ENCODE measurements at regions of chr2 and their contacts with region 1.

Region 1: GRCh38 chr2:96145036-96145847 is at the start of gene DUSP2:
- DNase-seq: peak in 8 of 10 donors; percentile 43 to 80 (median 59)
- H3K4me3 ChIP-seq: peak within 1 kb of the TSS; percentile 36 to 77 (median 64)
- H3K27ac ChIP-seq: peak within 1 kb of the TSS in 53 of 59 donors; percentile 3 to 84 (median 66)
- H3K27me3 ChIP-seq: no peaks in the 10 kb centered on the region
- CTCF ChIP-seq: peak in 13 of 56 donors; percentile 10 to 29 (median 21)
- total RNA-seq, gene DUSP2: 2.9 to 109 (median 7.5) TPM

Region 2: GRCh38 chr2:96072746-96073145 is 72.5 kb before region 1 on chr2:
- intact Hi-C with region 1: no loop called
- DNase-seq: no peak
- H3K4me3 ChIP-seq: no peak overlapping the region
- H3K27ac ChIP-seq: peak overlapping the region in 40 of 59 donors; percentile 29 to 89 (median 77)
- H3K27me3 ChIP-seq: no peaks in the 10 kb centered on the region
- CTCF ChIP-seq: no peak

Region 3: DNA sequence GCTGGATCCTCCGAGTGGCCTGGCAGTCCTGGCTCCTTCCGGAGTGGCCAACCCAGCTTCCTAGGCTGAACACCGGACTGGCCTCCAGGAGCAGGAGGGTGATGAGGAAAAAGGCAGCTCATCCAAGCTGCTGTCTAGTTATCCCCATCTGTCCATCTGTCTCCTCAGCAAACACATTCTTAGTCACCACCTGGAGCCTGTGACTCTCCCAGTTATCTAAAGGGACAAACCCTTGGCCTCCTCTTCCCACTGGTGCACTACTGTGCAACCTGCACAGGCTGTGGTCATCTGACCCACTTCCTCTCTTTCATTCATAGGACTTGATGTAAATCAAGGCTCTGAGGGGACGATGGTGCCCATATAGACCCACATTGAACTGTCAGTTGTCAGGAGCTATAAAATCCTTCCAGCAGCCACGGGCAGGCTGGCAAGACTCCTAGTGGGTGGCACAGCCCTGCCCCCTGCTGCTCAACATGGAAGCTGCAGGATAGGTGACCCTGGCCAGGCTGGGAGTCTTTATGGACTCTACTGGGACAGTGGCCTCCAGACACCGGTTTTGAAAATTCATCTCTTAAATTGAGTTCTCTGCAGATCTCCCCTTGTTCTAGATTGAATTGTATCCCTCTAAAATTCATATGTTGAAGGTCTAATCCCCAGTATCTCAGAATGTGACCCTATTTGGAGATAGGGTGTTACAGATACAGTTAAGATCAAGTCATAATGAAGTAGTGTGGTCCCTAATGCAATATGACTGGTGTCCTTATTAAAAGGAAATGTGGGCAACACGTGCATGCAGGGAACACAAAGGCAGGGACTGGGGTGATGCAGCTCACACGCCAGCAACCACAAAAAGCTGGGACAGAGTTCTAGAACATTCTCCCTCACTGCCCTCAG is 29.3 kb after region 1 on chr2:
- intact Hi-C with region 1: no loop called
- DNase-seq: peak; percentile 64 to 86 (median 79)
- H3K4me3 ChIP-seq: no peak overlapping the region
- H3K27ac ChIP-seq: peak overlapping the region in 5 of 59 donors; percentile 8 to 56 (median 15)
- H3K27me3 ChIP-seq: no peaks in the 10 kb centered on the region
- CTCF ChIP-seq: peak; percentile 48 to 99 (median 94)

Region 4: DNA sequence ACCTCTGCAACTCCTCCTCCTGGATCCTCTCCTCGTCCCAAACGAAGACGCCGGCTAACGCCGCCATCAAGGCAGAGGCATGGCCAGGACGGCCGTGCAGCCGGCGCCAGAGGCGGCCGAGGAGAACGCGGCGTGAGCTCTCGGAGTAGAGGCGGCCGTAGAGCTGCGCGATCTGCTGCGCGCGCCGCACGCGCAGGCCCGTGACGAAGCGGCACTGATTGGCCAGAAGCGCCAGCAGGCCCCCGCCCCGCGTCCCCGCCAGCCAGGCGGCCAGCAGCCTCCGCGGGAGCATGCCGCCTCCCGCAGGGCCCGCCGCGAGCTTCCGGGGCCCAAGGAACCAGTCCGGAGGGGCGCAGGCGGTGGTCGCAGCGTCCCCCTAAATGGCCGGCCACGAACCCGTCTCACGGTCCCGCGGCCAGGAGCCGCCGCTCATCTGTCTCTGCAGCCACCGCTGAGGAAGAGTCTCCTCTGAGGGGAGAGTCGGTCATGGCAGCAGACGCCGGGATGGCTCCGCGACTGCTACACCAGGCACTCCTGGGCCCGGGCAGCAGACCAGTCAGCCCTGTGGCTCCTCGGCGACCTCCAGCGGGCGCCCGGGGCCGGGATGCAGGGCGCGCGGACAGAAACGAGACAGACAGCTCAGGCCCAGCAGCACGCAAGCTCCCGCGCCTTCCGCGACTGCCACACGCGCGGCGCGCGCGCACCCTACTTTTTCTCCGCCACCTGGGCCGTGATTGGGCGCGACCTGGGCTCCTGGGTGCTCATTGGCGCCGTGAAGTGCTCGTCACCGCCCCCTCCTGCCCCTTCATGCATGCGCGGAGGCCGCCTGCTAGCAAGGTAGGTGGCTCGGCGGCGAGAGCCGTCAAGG is 63.1 kb after region 1 on chr2 and contains the start of gene STARD7:
- intact Hi-C with region 1: loop called in 1 of 2 experiments (anchors 5 kb)
- DNase-seq: peak; percentile 96 to 99 (median 98)
- H3K4me3 ChIP-seq: peak within 1 kb of the TSS; percentile 58 to 99 (median 94)
- H3K27ac ChIP-seq: peak within 1 kb of the TSS; percentile 70 to 99 (median 95)
- H3K27me3 ChIP-seq: no peaks in the 10 kb centered on the region
- CTCF ChIP-seq: peak in 35 of 56 donors; percentile 4 to 63 (median 37)
- total RNA-seq, gene STARD7: 105 to 205 (median 135) TPM

Region 5: DNA sequence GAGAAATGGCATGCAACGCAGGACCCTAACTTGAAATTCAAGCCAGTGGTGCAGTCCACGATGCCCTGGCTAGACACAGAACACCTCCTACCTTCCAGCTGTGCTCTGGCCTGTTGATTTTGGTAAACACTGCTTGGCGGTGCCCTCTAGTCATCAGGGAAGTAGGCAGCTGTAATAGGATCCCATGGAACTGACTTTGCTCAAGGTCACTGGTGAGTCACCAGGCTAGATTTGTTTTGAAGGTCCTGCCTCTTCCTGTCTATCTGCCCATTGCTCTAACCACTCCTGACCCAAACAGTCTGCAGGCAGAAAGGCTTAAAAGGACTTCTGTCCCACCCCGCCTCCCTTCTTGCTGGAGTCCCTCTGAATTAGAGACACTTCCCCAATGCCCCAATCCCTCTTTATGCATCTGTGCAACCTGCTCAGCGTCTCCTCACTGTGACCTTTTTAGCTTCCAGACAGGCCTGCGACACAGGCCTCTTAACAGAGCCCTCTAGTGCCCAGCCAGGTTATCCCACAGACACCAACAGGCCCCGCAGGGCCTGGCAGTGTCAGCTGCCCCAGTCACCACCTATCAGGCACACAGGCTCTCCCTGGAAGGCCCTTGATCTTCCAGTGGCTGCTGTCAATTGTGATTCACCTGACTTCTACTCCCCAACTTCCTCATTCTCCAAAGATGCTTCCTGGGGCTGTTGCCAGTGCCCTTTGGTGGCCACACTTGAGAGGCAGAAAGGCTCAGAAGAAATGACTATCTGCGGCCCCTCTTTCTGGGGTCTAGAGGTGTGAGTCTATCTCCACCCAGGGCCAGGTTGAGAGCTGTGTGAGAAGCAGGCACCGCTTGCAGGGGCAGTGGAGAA is 115.4 kb after region 1 on chr2:
- intact Hi-C with region 1: loop called (anchors 5 to 10 kb)
- DNase-seq: peak in 2 of 10 donors; percentile 20 to 44
- H3K4me3 ChIP-seq: peak overlapping the region in 13 of 59 donors; percentile 3 to 26 (median 13)
- H3K27ac ChIP-seq: peak overlapping the region in 58 of 59 donors; percentile 2 to 86 (median 74)
- H3K27me3 ChIP-seq: no peaks in the 10 kb centered on the region
- CTCF ChIP-seq: peak in 49 of 56 donors; percentile 14 to 58 (median 33)

Measured in dorsolateral prefrontal cortex (tissue), 120 donors.